Endothelial cell of umbilical vein (primary cell): ENCODE measurements at regions of chr17 and their contacts with region 1.

Region 1: DNA sequence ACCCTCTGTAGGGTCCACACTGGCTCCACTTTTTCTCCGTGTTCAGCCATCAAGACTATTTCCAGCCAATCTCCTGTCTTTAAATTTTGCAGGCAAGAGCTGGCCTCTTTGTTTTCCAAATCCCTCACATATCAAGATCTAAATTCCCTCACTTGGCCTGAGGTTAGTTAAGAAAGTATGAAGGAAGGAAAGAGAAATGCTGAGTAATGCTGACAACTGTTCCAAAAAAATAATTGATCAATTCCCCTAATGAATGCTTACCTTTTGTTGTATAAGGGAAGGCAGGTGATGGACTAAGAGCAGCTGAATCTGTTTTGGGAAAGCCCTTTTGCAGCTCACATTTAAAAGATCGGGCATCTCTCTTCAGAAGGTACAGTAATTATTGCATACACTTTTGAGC is 105.1 kb upstream of the KCNJ16 start:
- DNase-seq: no peak
- H3K4me3 ChIP-seq: no peak overlapping the region
- H3K27ac ChIP-seq: no peak overlapping the region
- H3K4me1 ChIP-seq: no peaks in the 10 kb centered on the region
- H3K27me3 ChIP-seq: no peaks in the 10 kb centered on the region
- CTCF ChIP-seq: no peak
- POLR2A ChIP-seq: no peak

Region 2: GRCh38 chr17:70006159-70006558 is 36.3 kb after region 1 on chr17:
- CTCF ChIA-PET with region 1: no interaction called
- POLR2A ChIA-PET with region 1: no interaction called
- dilution Hi-C with region 1: no loop called
- intact Hi-C with region 1: loop called (anchors 2 kb)
- DNase-seq: no peak
- H3K4me3 ChIP-seq: no peak overlapping the region
- H3K27ac ChIP-seq: no peak overlapping the region
- H3K4me1 ChIP-seq: no peaks in the 10 kb centered on the region
- H3K27me3 ChIP-seq: no peaks in the 10 kb centered on the region
- CTCF ChIP-seq: no peak
- POLR2A ChIP-seq: no peak

Region 3: GRCh38 chr17:70100983-70101382 is 131.1 kb after region 1 on chr17:
- CTCF ChIA-PET with region 1: no interaction called
- POLR2A ChIA-PET with region 1: no interaction called
- dilution Hi-C with region 1: no loop called
- intact Hi-C with region 1: no loop called
- DNase-seq: no peak
- H3K4me3 ChIP-seq: no peak overlapping the region
- H3K27ac ChIP-seq: no peak overlapping the region
- H3K4me1 ChIP-seq: peaks cover 11% of the 10 kb centered on the region
- H3K27me3 ChIP-seq: no peaks in the 10 kb centered on the region
- CTCF ChIP-seq: no peak
- POLR2A ChIP-seq: no peak